PC-9 (cell line): ENCODE measurements at regions of chr11 and their contacts with region 1.

Region 1: GRCh38 chr11:62726915-62727763 is at the start of gene HNRNPUL2:
- DNase-seq: peak; percentile 98 to 99
- H3K4me3 ChIP-seq: peak within 1 kb of the TSS; percentile 84
- H3K27ac ChIP-seq: peak within 1 kb of the TSS; percentile 76
- H3K4me1 ChIP-seq: peaks cover 26% of the 10 kb centered on the region
- H3K27me3 ChIP-seq: no peaks in the 10 kb centered on the region
- CTCF ChIP-seq: no peak
- total RNA-seq, gene HNRNPUL2: 55.2 and 76.9 TPM in 2 replicates

Region 2: DNA sequence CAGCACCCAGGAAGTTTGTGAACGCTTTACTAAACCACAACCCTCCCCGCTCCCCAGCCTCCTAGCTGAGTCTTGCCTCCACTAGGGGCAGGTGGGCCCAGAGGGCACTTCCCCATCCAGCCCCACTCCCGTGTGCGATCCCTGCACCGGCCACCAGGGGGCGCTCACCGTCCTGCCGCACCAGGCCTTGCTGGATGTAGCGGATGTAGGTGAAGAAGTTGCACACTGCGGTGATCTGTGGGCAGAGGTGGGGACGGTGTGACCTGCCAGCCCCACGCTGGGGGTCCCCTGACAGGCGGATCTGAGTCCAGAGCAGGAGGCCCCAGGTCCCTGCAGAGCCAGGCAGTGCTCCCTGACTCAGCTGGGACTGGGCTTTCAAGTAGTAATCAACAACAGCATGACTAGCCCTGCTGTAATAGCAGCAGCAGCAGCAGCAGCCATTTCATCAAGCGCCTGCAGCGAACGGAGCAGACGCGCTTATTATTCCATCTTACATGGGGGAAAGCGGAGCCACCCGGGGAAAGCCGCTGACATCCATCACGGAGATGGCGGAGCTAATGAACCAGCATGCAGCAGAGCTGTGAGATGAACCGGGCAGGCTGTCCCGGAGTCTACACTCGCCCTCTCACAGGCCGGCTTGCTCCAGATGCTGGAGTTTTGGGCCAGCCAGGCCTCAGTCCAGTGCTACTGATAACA is 827.8 kb before region 1 on chr11:
- CTCF ChIA-PET with region 1: interaction called, 10 read pairs
- POLR2A ChIA-PET with region 1: no interaction called
- intact Hi-C with region 1: no loop called
- DNase-seq: peak; percentile 73 to 90
- H3K4me3 ChIP-seq: no peak overlapping the region
- H3K27ac ChIP-seq: no peak overlapping the region
- H3K4me1 ChIP-seq: no peaks in the 10 kb centered on the region; the same call in 1 of the 2 replicates
- H3K27me3 ChIP-seq: no peaks in the 10 kb centered on the region
- CTCF ChIP-seq: peak; percentile 100

Region 3: DNA sequence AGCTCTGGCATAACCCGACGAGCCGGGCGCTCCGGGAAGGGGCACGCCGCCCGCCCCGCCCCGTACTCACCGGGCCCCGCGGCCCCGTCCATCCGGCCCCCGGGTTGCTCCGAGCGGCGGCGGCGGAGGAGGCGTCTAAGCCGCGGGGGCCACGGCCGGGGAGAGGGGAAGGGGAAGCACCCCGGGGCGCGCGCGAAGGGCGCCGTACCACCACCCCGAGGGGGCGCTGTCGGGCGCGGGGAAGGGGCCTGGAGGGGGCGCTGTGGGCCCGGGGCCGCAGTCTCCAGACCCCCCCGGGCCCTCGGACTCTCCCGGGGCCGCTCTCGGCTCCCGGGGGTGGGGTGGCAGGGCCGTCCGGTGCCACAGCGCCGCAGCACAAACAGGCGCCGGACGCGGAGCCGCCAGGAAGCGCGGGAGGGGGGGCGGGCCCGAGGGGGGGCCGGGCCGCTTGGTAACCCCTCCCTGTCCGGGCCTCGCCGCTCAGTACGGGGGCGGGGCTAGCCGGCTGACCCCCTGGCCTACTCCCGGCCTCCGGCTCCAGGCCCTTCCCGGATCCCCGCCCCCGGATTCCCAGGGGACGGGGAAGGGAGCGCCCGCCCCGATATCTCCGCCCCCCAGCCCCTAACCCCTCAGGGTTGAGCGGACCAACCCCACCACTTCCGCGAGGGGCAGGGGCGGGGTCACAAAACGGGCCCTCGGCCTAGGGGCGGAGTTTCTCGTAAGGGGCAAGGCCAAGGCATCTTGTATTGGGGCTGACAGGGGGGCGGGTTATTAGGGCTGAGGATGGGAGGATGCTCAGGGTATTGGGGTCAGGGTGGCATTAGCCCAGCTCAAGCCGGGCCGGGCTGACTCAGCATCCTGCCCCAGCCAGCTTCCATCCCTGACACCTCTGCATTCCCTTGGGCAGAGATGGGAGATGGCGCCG is 114.5 kb before region 1 on chr11 and contains the starts of genes EML3 and ROM1:
- CTCF ChIA-PET with region 1: no interaction called
- POLR2A ChIA-PET with region 1: no interaction called
- intact Hi-C with region 1: loop called (anchors 5 kb)
- DNase-seq: peak; percentile 79 to 93
- H3K4me3 ChIP-seq: peak within 1 kb of the TSS; percentile 85
- H3K27ac ChIP-seq: peak within 1 kb of the TSS; percentile 66
- H3K4me1 ChIP-seq: peaks cover 35% of the 10 kb centered on the region
- H3K27me3 ChIP-seq: no peaks in the 10 kb centered on the region
- CTCF ChIP-seq: peak; percentile 87
- total RNA-seq, gene EML3: 83.2 and 84.2 TPM in 2 replicates
- total RNA-seq, gene ROM1: 6.2 and 7.0 TPM in 2 replicates

Region 4: DNA sequence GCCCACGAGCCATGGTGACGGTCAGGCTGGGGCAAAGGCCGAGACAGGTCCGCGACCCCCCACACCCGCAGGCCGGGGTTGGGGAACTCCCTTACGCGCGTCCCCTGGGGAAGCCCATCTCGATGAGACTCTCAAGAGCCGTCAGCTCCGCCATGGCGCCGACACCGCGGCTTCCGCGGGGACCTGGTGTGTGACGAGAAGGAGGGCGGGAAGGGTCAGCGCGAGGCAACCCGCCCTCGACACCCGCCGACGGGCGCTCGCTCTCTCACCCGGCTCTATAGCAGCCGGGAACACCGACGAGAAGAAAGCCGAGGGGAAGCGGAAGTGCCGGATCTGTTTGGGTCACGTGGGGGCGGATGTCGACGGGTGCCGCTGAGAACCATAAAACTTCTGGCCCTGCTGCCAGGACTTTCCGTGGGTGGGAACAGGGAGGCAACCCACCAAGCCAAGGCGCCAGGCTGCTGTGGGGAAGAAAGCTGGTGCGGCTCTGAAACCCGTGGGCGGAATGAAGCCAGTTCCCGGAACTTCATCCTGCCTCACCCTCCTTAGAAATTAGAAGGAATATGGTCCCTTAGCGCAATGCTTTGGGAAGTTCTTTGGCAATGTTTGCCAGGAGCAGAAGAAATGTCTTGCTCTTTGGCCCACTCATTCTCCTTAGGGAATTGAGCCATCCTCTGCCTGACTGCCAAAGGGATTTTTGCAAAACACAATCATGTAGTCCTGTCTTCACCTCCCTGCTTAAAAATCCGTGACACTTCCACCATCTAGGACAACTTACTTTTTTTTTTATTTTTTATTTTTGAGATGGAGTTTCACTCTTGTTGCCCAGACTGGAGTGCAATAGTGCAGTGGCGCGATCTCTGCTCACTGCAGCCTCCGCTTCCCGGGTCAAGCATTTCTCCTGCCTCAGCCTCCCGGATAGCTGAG is 48.1 kb before region 1 on chr11 and contains the start of gene UBXN1:
- CTCF ChIA-PET with region 1: no interaction called
- POLR2A ChIA-PET with region 1: no interaction called
- intact Hi-C with region 1: loop called (anchors 2 kb)
- DNase-seq: peak; percentile 78 to 80
- H3K4me3 ChIP-seq: peak within 1 kb of the TSS; percentile 76
- H3K27ac ChIP-seq: peak within 1 kb of the TSS; percentile 37
- H3K4me1 ChIP-seq: peaks cover 29% of the 10 kb centered on the region
- H3K27me3 ChIP-seq: no peaks in the 10 kb centered on the region
- CTCF ChIP-seq: no peak
- total RNA-seq, gene UBXN1: 143 and 150 TPM in 2 replicates

Region 5: DNA sequence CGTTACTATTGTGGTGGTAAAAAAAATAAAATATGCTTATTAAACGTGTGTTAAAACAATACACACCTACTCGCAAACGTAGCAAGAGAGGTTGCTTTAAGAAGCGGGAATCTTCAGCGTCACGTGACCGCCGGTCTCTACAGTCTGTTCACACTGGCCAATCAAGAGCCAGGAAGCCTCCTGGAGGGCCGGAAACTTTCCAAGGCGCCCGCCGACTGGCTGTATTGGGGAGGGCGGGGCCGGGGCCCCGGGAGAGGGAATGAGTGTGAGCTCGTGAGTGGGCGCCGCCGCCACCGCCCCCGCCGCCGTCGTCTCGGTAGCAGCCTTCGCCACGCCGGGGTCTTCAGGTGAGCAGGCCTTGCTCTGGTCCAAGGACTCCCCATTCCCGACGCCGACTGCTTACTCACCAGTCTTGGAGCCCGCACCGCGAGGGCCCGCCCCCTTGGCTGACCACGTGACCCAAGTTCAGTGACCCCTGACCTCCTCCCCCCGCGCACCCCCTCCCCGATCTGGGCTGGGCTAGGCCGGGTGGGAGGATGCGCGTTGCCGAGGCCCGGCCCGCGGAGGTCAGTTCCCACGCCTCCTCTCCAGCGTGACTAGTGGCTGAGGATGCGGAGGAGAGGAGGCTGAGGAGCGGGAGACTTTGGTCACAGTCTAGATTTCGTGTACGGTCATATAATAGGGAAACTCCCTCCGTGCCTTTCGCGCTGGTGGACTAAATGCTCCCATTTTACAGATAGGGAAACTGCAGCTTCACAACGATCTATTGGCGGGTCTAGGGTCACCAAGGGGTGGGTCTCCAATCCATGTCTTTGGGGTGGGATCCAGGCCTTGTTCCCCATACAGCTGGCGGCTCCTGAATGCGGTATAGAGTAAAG is 44.2 kb after region 1 on chr11 and contains the start of gene TAF6L:
- CTCF ChIA-PET with region 1: no interaction called
- POLR2A ChIA-PET with region 1: interaction called, 7 read pairs
- intact Hi-C with region 1: loop called (anchors 1 kb)
- DNase-seq: peak; percentile 95 to 97
- H3K4me3 ChIP-seq: peak within 1 kb of the TSS; percentile 59
- H3K27ac ChIP-seq: peak within 1 kb of the TSS; percentile 77
- H3K4me1 ChIP-seq: peaks cover 14% of the 10 kb centered on the region
- H3K27me3 ChIP-seq: no peaks in the 10 kb centered on the region
- CTCF ChIP-seq: no peak
- total RNA-seq, gene TAF6L: 31.2 and 36.4 TPM in 2 replicates

Region 6: GRCh38 chr11:62816557-62816956 is 89.4 kb after region 1 on chr11:
- CTCF ChIA-PET with region 1: no interaction called
- POLR2A ChIA-PET with region 1: no interaction called
- intact Hi-C with region 1: no loop called
- DNase-seq: no peak
- H3K4me3 ChIP-seq: no peak overlapping the region
- H3K27ac ChIP-seq: no peak overlapping the region
- H3K4me1 ChIP-seq: no peaks in the 10 kb centered on the region
- H3K27me3 ChIP-seq: no peaks in the 10 kb centered on the region
- CTCF ChIP-seq: no peak

Region 7: DNA sequence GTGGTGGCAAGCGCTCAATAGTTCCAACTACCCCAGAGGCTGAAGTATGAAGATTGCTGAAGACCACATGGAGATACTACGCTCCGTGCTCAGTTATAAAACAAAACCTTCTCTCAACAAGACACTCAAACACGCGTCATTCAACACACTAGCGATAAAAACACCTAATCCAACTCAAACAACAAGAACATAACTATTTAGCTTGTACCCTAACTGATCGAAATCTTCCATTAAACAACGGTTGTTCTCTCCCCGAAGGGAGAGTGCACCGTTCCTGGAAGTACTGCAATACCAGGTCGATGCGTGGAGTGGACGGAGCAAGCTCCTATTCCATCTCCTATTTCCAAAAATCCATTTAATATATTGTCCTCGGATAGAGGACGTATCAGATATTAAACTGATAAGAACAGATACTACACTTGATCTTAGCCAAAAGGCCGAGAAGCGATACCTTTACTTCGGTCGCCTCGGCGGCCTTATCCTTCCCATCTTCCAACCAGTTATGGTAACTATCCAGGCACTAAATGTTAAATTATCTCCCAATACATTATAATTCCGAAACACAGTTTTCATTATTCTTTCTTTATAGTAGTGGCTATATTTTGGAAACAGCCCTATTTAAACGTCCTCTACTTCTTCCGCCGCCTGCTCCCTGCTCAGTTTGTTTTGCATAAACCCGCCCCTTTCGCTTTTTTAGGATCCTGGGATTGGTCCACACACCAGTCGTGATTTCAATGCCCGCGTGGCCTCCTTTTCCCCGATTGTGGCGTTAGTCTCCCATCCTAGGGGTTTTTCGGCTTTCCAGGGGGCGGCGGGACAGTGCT is 114.4 kb after region 1 on chr11:
- CTCF ChIA-PET with region 1: no interaction called
- POLR2A ChIA-PET with region 1: interaction called, 17 read pairs
- intact Hi-C with region 1: loop called (anchors 2 kb)
- DNase-seq: peak; percentile 92 to 100
- H3K4me3 ChIP-seq: peak overlapping the region; percentile 89
- H3K27ac ChIP-seq: peak overlapping the region; percentile 94
- H3K4me1 ChIP-seq: peaks cover 17% of the 10 kb centered on the region
- H3K27me3 ChIP-seq: no peaks in the 10 kb centered on the region
- CTCF ChIP-seq: no peak